ENCODE measurements at regions of chr4 and their contacts with region 1.

Region 1: GRCh38 chr4:165112368-165113139 is at the start of gene TMEM192:
- DNase-seq: peak; percentile 95
- ATAC-seq: peak; percentile 97
- H3K4me3 ChIP-seq: peak within 1 kb of the TSS; percentile 89 to 93 (median 91)
- H3K4me3 Mint-ChIP-seq: peak within 1 kb of the TSS; percentile 98
- H3K27ac ChIP-seq: peak within 1 kb of the TSS; percentile 75 to 92
- H3K27ac Mint-ChIP-seq: peak within 1 kb of the TSS; percentile 97
- H3K4me1 ChIP-seq: peaks cover 9 to 11% of the 10 kb centered on the region in 2 donors
- H3K4me1 Mint-ChIP-seq: peaks cover 15% of the 10 kb centered on the region
- H3K27me3 ChIP-seq: no peaks in the 10 kb centered on the region
- H3K27me3 Mint-ChIP-seq: peaks cover 7% of the 10 kb centered on the region
- CTCF ChIP-seq: no peak
- total RNA-seq, gene TMEM192: 13.3 and 14.3 TPM in 2 replicates

Region 2: GRCh38 chr4:163166041-163166579 is 1946.4 kb before region 1 on chr4:
- CTCF ChIA-PET with region 1: no interaction called
- POLR2A ChIA-PET with region 1: no interaction called
- intact Hi-C with region 1: loop called (anchors 10 kb)
- DNase-seq: peak; percentile 78
- ATAC-seq: peak; percentile 56
- H3K4me3 ChIP-seq: peak overlapping the region; percentile 73 to 86 (median 83)
- H3K4me3 Mint-ChIP-seq: peak overlapping the region; percentile 97
- H3K27ac ChIP-seq: peak overlapping the region; percentile 91 to 94
- H3K27ac Mint-ChIP-seq: peak overlapping the region; percentile 98
- H3K4me1 ChIP-seq: peaks cover 15 to 18% of the 10 kb centered on the region in 2 donors
- H3K4me1 Mint-ChIP-seq: peaks cover 39% of the 10 kb centered on the region
- H3K27me3 ChIP-seq: no peaks in the 10 kb centered on the region
- H3K27me3 Mint-ChIP-seq: no peaks in the 10 kb centered on the region
- CTCF ChIP-seq: no peak

Region 3: DNA sequence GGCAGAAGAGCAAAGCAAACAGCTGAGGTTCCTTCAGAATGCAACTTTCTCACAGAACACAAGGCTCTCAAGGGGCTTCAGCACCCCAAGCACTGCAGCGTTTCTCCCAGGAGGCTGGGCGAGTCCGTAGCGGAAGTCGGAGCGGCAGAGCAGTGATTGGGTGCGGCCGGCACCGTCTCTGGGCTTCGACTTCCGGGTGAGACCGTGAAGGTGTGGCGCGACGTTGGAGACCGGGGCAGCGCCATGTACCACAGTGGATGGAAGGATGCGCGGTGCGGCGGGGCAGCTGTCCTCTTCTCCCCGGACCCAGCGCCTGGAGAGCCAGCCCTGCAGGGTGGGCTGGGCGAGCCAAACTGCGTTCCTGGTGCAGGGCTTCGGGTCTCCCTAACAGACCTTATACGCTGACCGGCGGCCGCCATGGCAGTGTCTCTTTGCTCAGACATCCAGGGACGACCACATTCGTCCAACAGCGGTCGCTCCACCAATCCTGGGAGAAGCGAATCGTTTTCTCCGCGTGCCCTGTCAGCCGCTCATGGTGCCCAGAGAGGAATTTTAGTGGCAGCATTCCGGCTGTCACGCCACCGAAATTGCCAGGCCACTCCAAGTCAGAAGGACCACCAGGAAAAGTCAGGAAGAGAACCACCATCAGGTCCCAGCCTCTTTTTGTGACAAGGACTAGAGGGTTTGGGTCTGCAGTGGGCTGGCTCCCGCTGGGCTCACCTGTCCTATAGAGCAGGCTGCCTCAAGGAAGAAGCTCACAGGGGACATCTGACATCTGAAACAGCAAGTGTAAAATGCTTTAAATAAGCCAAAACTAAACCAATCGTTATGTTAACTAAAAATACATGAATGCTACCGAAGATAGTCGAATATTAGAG is 155.5 kb before region 1 on chr4:
- CTCF ChIA-PET with region 1: no interaction called
- POLR2A ChIA-PET with region 1: interaction called, 4 read pairs
- intact Hi-C with region 1: loop called (anchors 2 kb)
- DNase-seq: peak; percentile 82
- ATAC-seq: peak; percentile 100
- H3K4me3 ChIP-seq: peak overlapping the region; percentile 38 to 81 (median 68)
- H3K4me3 Mint-ChIP-seq: peak overlapping the region; percentile 97
- H3K27ac ChIP-seq: peak overlapping the region in 1 of 2 donors; percentile 56
- H3K27ac Mint-ChIP-seq: peak overlapping the region; percentile 88
- H3K4me1 ChIP-seq: peaks cover 8 to 14% of the 10 kb centered on the region in 2 donors
- H3K4me1 Mint-ChIP-seq: peaks cover 18% of the 10 kb centered on the region
- H3K27me3 ChIP-seq: peaks cover 0 to 5% (median 2%) of the 10 kb centered on the region in 4 experiments
- H3K27me3 Mint-ChIP-seq: peaks cover 8% of the 10 kb centered on the region
- CTCF ChIP-seq: no peak

Region 4: DNA sequence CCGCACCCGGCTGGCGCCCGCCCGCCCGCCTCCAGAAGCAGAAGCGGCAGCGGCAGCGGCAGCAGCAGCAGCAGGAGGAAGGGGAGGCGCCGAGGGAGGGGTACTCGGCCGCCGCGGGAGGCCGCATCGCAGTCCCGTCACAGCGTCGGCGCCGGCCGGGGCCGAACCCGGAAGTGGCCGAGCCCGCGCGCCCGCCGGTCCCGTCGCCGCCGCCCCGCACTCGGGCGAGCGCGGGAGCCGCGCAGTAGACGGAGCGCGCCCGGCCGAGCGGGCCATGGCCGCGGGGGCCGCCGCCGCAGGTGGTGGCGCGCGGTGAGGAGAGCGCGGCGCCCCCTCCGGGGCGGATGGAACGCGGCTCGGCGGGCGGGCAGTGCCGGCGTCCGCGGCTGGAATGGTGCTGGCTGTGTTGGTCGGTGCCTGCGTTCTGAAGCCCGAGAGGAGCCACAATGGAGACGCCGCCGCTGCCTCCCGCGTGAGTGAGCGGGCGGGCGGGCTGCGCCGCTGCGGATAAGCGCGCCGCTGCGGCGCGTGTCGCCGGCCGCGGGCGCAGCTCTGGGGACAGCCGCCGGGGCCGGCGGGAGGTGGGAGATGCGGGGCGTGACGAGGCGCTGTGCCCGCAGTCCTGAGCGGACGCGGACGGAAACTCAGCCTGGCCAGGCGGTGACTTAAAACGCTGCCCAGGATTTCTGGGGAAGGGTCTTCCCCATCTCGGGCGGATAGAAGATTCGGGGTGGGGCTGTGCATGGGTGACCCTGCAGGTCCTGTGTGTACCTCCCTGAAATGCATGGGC is 95.1 kb after region 1 on chr4 and contains the start of gene KLHL2:
- CTCF ChIA-PET with region 1: interaction called, 8 read pairs
- POLR2A ChIA-PET with region 1: no interaction called
- intact Hi-C with region 1: loop called (anchors 1 kb)
- DNase-seq: peak; percentile 88
- ATAC-seq: peak; percentile 88
- H3K4me3 ChIP-seq: peak within 1 kb of the TSS; percentile 73 to 91 (median 80)
- H3K4me3 Mint-ChIP-seq: peak within 1 kb of the TSS; percentile 95
- H3K27ac ChIP-seq: peak within 1 kb of the TSS; percentile 57 to 73
- H3K27ac Mint-ChIP-seq: peak within 1 kb of the TSS; percentile 93
- H3K4me1 ChIP-seq: peaks cover 36 to 39% of the 10 kb centered on the region in 2 donors
- H3K4me1 Mint-ChIP-seq: peaks cover 65% of the 10 kb centered on the region
- H3K27me3 ChIP-seq: no peaks in the 10 kb centered on the region
- H3K27me3 Mint-ChIP-seq: no peaks in the 10 kb centered on the region
- CTCF ChIP-seq: no peak
- total RNA-seq, gene KLHL2: 76.2 and 77.5 TPM in 2 replicates

Region 5: DNA sequence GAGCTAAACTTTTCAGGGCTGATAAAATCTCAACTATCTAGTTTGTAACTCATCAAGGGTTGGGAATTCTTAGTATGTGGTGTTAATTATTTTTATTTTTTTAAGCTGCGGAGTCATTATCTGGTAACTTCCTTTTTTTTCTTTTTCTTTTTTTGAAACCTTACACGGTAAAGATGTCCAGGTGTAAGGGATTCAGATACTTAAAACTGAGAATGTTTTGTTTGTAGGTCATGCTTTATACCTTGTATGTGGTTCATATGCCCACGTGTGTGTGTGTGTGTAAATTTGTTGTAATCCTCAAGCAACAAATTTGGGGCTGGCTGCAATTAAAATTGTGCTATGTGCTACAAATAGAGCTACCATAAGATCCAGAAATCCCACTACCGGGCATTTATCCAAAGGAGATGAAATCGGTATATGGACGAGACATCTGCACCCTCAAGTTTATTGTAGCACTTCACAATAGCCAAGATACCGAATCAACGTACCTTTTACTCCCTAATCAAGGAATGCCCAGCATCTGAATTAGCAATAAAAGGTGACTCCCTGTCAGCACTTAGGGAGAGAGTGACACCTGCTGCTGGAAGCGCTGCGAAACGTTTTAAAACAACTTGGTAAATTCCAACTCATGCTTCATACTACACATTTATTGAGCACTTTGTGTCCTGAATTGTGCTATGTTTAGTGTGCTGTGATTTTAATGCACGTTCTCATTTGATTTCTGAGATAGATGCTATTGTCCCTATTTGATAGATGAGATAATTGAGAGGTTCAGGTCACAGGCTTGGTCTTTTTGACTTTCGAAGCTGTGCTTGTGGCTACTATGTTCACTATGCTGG is 231.0 kb after region 1 on chr4:
- CTCF ChIA-PET with region 1: interaction called, 4 read pairs
- POLR2A ChIA-PET with region 1: no interaction called
- intact Hi-C with region 1: loop called (anchors 5 kb)
- DNase-seq: peak; percentile 44
- ATAC-seq: no peak
- H3K4me3 ChIP-seq: no peak overlapping the region
- H3K4me3 Mint-ChIP-seq: no peak overlapping the region
- H3K27ac ChIP-seq: peak overlapping the region in 1 of 2 donors; percentile 2
- H3K27ac Mint-ChIP-seq: no peak overlapping the region
- H3K4me1 ChIP-seq: no peaks in the 10 kb centered on the region
- H3K4me1 Mint-ChIP-seq: peaks cover 2% of the 10 kb centered on the region
- H3K27me3 ChIP-seq: no peaks in the 10 kb centered on the region
- H3K27me3 Mint-ChIP-seq: no peaks in the 10 kb centered on the region
- CTCF ChIP-seq: peak; percentile 35

Measured in B cell (primary cell).